Activated naive CD4-positive, alpha-beta T cell treated with anti-CD3 and anti-CD28 coated beads for 36 hours (primary cell): ENCODE measurements at regions of chr19 and their contacts with region 1.

Region 1: DNA sequence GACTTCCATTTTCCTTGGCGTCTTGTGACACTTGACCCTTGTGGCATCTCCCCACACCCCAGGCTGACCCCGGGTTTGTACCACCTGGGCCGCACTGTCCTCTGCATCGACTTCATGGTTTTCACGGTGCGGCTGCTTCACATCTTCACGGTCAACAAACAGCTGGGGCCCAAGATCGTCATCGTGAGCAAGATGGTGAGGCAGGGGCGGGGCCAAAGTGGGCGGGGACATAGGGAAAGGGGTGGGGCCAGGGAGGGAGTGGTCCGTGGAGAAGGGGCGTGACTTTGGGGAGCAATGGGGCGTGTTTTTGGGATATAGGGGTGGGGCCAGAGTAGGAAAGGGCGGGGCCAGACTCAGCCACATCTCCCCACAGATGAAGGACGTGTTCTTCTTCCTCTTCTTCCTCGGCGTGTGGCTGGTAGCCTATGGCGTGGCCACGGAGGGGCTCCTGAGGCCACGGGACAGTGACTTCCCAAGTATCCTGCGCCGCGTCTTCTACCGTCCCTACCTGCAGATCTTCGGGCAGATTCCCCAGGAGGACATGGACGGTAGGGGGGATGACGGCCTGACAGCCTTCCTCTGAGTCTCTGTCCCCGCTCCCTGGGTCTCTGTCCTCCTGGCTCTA is 42.8 kb downstream of the TRPM4 start:
- DNase-seq: no peak
- H3K4me3 Mint-ChIP-seq: no peak overlapping the region
- H3K27ac Mint-ChIP-seq: no peak overlapping the region
- H3K4me1 Mint-ChIP-seq: peaks cover 2% of the 10 kb centered on the region
- H3K27me3 Mint-ChIP-seq: no peaks in the 10 kb centered on the region

Region 2: DNA sequence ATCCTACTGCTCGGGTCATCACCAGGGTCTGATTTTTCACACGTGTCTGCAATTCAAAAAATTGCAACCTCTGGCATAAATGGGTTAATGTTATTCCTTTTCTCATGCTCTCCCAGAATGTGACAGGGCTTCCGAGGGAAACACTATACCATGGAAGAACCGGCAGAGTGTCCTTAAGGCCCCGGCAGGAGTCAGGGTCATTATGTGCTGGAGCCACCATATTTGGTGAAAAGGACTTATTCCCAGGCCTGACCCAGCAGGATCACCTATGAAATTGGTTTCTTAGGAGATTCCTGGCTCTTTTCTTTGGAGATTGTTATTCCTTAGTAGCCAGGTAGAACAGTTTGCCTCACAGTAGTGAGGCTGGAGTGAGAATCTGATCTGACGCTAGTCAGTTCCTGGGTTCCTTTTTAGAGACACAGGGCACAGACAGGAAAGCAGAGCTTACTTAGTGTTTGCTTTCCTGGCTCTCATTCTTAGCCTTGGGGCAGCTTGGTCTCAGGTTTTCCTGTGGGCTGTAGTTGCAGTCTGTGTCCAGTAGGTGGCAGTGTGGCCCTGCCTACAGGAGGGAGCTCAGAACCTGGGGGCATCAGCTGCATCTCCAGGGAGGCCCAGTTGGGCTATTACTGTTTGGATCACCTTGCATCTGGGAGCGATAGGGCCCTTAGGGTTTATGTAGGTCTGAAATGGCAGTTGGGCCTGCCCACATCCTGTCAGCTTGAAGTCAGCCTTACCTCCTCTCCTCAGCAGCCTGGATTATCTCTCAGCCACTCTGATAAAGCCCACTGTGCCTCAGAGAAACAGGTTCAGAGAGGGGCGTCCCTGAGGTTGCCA is 102.7 kb before region 1 on chr19:
- CTCF ChIA-PET with region 1: interaction called, 16 read pairs
- intact Hi-C with region 1: loop called (anchors 1 kb)
- DNase-seq: peak; percentile 78
- H3K4me3 Mint-ChIP-seq: no peak overlapping the region
- H3K27ac Mint-ChIP-seq: no peak overlapping the region
- H3K4me1 Mint-ChIP-seq: peaks cover 4% of the 10 kb centered on the region
- H3K27me3 Mint-ChIP-seq: no peaks in the 10 kb centered on the region

Region 3: GRCh38 chr19:49186108-49186507 is 14.2 kb before region 1 on chr19:
- CTCF ChIA-PET with region 1: interaction called, 18 read pairs
- intact Hi-C with region 1: no loop called
- DNase-seq: no peak
- H3K4me3 Mint-ChIP-seq: no peak overlapping the region
- H3K27ac Mint-ChIP-seq: no peak overlapping the region
- H3K4me1 Mint-ChIP-seq: peaks cover 9% of the 10 kb centered on the region
- H3K27me3 Mint-ChIP-seq: peaks cover 5% of the 10 kb centered on the region

Region 4: GRCh38 chr19:49282184-49282583 is 81.8 kb after region 1 on chr19:
- CTCF ChIA-PET with region 1: no interaction called
- intact Hi-C with region 1: no loop called
- DNase-seq: no peak
- H3K4me3 Mint-ChIP-seq: no peak overlapping the region
- H3K27ac Mint-ChIP-seq: no peak overlapping the region
- H3K4me1 Mint-ChIP-seq: no peaks in the 10 kb centered on the region
- H3K27me3 Mint-ChIP-seq: peaks cover 6% of the 10 kb centered on the region

Region 5: DNA sequence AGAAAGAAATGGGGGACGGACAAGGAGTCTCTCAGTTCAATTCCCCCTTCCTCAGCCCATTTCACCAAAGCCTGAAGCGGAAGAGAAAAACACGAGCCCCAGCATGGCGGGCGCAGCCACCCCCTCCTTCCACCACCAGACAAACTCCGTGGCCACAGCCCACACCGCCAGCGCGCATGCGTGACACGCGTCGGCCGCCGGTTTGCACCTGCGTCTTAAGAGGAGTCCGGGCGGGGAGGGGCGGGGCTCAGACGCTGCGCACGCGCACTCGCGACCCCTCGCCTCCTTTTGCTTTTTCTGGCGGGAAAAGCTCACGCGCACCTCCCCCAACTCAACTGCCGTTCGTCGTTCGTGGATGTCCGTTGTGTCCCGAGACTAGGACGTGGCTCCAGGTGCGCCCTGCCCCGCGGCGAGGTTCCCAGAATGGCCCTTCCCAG is 187.6 kb after region 1 on chr19 and contains the start of gene KASH5:
- CTCF ChIA-PET with region 1: no interaction called
- intact Hi-C with region 1: no loop called
- DNase-seq: peak; percentile 95
- H3K4me3 Mint-ChIP-seq: peak within 1 kb of the TSS; percentile 68
- H3K27ac Mint-ChIP-seq: peak within 1 kb of the TSS; percentile 86
- H3K4me1 Mint-ChIP-seq: peaks cover 15% of the 10 kb centered on the region
- H3K27me3 Mint-ChIP-seq: peaks cover 3% of the 10 kb centered on the region
- total RNA-seq, gene KASH5: 2.4 to 3.2 TPM

Region 6: GRCh38 chr19:49430678-49431329 is 230.5 kb after region 1 on chr19:
- CTCF ChIA-PET with region 1: no interaction called
- intact Hi-C with region 1: no loop called
- DNase-seq: peak; percentile 56
- H3K4me3 Mint-ChIP-seq: no peak overlapping the region
- H3K27ac Mint-ChIP-seq: no peak overlapping the region
- H3K4me1 Mint-ChIP-seq: peaks cover 45% of the 10 kb centered on the region
- H3K27me3 Mint-ChIP-seq: peaks cover 89% of the 10 kb centered on the region